ENCODE measurements at regions of chr6 and their contacts with region 1.

Region 1: DNA sequence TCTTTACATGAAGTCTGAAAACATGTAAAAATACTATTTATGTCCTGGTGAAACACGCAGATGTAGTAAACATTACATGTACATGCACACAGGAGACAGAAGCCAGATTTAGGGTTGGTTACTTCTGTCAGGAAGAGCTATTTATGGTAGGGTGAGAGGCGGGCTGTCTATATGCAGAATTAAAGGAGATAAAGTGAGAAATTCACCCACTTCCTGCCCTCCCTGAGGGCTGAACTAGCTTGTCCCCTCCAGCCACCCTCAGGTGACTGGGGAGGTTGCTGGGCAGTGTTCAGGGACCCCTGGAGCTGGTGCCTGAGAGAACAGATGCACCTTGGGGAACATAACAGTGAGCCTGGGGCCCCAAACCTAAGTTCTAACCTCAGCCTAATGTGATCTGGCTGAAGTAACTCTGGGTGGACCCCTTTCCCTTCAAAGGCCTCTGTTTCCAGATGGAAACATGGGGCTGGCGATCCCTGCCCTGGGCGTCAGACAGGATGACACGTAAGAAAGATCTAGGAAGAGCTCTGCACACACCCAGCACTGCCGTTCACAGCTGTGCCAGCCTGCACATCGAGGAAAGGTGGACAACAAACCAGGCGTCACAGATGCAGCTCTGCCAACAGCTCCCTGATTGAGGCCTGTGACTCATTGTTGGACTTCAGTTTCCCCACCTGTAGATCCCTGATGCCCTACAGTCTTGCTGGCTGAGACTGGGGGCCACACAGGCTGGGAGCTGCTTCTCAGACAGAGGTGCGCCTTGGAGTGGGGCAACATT is 1.3 kb downstream of the PI16 start:
- DNase-seq: no peak
- ATAC-seq: peak; percentile 38
- H3K4me3 Mint-ChIP-seq: no peak overlapping the region
- H3K27ac Mint-ChIP-seq: no peak overlapping the region
- H3K4me1 Mint-ChIP-seq: peaks cover 39% of the 10 kb centered on the region
- H3K27me3 Mint-ChIP-seq: peaks cover 17% of the 10 kb centered on the region

Region 2: DNA sequence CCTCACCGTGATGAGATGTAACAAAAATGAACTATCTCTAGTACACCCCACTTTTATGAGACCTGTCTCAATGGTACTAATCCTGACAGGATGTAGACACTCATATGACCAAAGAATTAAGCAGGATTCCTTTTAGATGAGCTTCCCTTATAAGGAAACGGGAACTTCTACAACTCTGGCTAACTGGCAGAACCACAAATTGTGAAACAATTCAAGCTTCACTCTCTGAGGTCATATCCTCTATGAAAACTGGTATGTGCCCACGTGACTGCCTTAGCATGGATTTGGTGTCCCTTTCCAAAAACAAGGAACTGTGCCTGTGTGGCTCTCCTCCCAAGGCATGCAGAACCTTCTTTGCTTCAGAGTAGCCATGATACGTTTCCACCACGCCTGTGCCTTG is 102.5 kb before region 1 on chr6:
- CTCF ChIA-PET with region 1: no interaction called
- POLR2A ChIA-PET with region 1: no interaction called
- DNase-seq: no peak
- ATAC-seq: no peak
- H3K4me3 Mint-ChIP-seq: no peak overlapping the region
- H3K27ac Mint-ChIP-seq: peak overlapping the region; percentile 3
- H3K4me1 Mint-ChIP-seq: peaks cover 12% of the 10 kb centered on the region
- H3K27me3 Mint-ChIP-seq: no peaks in the 10 kb centered on the region

Region 3: GRCh38 chr6:36979347-36979742 is 23.5 kb after region 1 on chr6:
- CTCF ChIA-PET with region 1: interaction called, 10 read pairs
- POLR2A ChIA-PET with region 1: interaction called, 5 read pairs
- DNase-seq: peak; percentile 67
- ATAC-seq: peak; percentile 67
- H3K4me3 Mint-ChIP-seq: no peak overlapping the region
- H3K27ac Mint-ChIP-seq: peak overlapping the region; percentile 31
- H3K4me1 Mint-ChIP-seq: peaks cover 34% of the 10 kb centered on the region
- H3K27me3 Mint-ChIP-seq: no peaks in the 10 kb centered on the region

Measured in activated CD8-positive, alpha-beta T cell treated with anti-CD3 and anti-CD28 coated beads, Interleukin-2, amount 10 ng/mL, durations not matched to agents 7 days and 5 days (primary cell).